A549 (cell line): ENCODE measurements at regions of chr16 and their contacts with region 1.

Region 1: DNA sequence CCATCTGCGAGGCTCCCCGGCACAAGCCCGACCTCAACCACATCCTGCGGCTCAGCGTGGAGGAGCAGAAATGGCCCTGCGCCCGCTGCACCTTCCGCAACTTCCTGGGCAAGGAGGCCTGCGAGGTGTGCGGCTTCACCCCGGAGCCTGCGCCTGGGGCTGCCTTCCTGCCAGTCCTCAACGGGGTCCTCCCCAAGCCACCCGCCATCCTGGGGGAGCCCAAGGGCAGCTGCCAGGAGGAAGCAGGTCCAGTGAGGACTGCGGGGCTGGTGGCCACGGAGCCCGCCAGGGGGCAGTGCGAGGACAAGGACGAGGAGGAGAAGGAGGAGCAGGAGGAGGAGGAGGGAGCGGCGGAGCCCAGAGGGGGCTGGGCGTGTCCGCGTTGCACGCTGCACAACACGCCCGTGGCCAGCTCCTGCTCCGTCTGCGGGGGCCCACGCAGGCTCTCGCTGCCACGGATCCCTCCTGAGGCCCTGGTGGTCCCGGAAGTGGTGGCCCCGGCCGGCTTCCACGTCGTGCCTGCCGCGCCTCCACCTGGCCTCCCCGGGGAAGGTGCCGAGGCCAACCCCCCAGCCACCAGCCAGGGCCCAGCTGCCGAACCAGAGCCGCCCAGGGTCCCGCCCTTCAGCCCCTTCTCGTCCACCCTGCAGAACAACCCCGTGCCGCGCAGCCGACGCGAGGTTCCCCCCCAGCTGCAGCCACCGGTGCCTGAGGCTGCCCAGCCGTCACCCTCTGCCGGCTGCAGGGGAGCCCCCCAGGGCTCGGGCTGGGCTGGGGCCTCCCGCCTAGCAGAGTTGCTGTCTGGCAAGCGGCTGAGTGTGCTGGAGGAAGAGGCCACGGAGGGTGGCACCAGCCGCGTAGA is 13.1 kb upstream of the PRR35 start:
- DNase-seq: peak in 1 of 2 experiments; percentile 71
- ATAC-seq: peak; percentile 67 to 91
- H3K4me3 ChIP-seq: no peak overlapping the region
- H3K27ac ChIP-seq: peak overlapping the region in 1 of 2 experiments; percentile 50; a peak in 1 of 6 replicates
- H3K4me1 ChIP-seq: 0 out of 3 replicates have a peak, but pooled peaks cover 2% of the 10 kb centered on the region
- CTCF ChIP-seq: peak; percentile 54
- EP300 ChIP-seq: no peak
- POLR2A ChIP-seq: no peak
- RAD21 ChIP-seq: peak; percentile 36 to 57; a peak in 4 of 5 replicates

Region 2: DNA sequence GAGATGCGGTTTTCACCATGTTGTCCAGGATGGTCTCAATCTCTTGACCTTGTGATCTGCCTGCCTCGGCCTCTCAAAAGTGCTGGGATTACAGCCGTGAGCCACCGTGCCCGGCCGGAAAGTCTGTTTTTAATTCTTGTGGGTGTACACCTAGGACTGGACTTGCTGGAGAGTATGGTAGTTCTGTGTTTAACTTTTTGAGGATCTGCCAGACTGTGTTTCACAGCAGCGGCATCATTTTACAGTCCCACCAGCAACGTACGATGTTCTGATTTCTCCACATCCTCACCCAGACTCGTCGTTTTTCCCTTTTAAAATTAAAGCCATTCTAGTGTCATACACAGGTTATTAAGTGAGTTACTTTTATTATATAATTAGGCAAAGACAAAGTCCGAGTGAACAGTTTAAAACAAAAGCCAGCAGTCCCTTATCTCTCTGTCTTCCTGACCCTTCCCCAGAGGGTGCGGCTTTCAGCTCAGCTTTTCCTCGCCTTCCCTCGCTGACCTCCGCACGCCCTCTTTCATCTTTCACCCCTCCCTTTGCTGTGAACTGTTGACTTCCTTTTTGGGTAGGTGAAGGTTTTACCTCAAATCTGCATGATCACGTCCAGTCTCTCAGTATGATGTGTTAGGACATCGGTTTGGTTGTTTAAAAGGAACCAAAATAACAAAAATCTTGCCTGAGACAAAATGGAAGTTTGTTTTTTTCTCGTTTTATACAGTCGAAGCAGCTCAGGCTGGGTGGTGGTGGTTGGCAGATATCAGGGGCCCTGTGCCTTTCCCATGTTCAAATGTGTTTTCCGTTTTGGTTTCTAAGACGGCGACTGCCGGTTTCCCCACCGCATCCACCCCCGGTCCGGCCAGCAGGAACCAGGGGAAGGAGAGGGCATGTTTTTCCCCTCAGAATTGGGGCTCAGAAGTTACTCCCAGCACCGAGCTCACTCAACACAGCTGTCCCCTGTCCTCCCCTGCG is 294.5 kb before region 1 on chr16:
- CTCF ChIA-PET with region 1: no interaction called
- POLR2A ChIA-PET with region 1: no interaction called
- DNase-seq: no peak
- ATAC-seq: no peak
- H3K4me3 ChIP-seq: no peak overlapping the region
- H3K27ac ChIP-seq: no peak overlapping the region
- H3K4me1 ChIP-seq: peaks cover 8% of the 10 kb centered on the region; the same call in 2 of the 3 replicates
- CTCF ChIP-seq: no peak
- EP300 ChIP-seq: no peak
- POLR2A ChIP-seq: no peak
- RAD21 ChIP-seq: no peak

Region 3: GRCh38 chr16:430904-431303 is 116.2 kb before region 1 on chr16:
- CTCF ChIA-PET with region 1: no interaction called
- POLR2A ChIA-PET with region 1: no interaction called
- DNase-seq: no peak
- ATAC-seq: no peak
- H3K4me3 ChIP-seq: no peak overlapping the region
- H3K27ac ChIP-seq: no peak overlapping the region
- H3K4me1 ChIP-seq: peaks cover 10% of the 10 kb centered on the region
- CTCF ChIP-seq: no peak
- EP300 ChIP-seq: no peak
- POLR2A ChIP-seq: no peak
- RAD21 ChIP-seq: no peak

Region 4: GRCh38 chr16:529012-529575 is 18.0 kb before region 1 on chr16:
- CTCF ChIA-PET with region 1: interaction called, 11 read pairs
- POLR2A ChIA-PET with region 1: no interaction called
- DNase-seq: no peak
- ATAC-seq: no peak
- H3K4me3 ChIP-seq: peak overlapping the region; percentile 96
- H3K27ac ChIP-seq: peak overlapping the region; percentile 95 to 97
- H3K4me1 ChIP-seq: peaks cover 42% of the 10 kb centered on the region
- CTCF ChIP-seq: no peak
- EP300 ChIP-seq: no peak
- POLR2A ChIP-seq: no peak
- RAD21 ChIP-seq: no peak

Region 5: DNA sequence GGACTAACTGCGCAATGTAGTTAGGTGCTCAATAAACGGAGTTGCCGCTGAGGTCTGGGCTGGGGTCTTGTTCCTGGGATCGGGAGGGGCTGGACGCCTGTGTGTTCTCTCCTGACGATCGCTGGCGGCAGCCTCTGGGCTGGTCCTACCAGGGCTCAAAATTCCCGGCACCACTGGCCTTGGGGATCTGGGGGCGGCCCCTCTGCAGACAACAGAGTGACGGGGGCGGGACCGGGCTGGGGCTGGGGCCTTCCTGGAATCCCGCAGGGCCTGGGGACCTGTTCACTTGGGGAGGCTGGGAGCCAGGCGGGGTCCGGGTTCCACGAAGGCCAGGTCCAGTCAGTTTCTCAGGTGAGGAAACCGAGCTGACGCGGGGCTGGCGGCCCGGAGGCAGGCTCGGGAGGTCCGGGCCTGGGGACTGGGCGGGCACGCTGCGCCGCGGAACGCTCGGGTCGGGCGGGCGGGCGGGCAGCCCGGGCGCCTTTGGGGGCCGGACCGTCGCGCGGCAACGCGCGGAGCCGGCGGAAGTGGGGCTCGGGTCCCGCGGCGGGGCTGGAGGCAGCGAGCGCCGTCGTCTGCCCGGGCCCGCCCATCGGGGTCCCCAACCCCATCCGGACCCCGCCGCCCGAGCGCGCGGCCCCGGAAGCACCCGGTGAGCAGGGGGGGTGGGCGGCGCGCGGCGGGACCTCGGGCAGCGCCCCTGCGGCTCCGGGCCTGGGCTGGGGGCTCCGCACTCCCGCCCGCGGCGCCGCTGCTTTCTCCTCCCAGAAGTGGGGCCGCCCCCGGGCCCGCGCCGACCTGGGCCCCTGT is 22.5 kb after region 1 on chr16 and contains the start of gene PIGQ:
- CTCF ChIA-PET with region 1: interaction called, 12 read pairs
- POLR2A ChIA-PET with region 1: no interaction called
- DNase-seq: peak; percentile 64 to 81
- ATAC-seq: peak; percentile 73 to 80
- H3K4me3 ChIP-seq: peak within 1 kb of the TSS; percentile 99
- H3K27ac ChIP-seq: peak within 1 kb of the TSS; percentile 91 to 95
- H3K4me1 ChIP-seq: peaks cover 22% of the 10 kb centered on the region
- CTCF ChIP-seq: no peak
- EP300 ChIP-seq: no peak
- POLR2A ChIP-seq: peak; percentile 18; the same call in 1 of the 2 replicates
- RAD21 ChIP-seq: no peak
- polyA plus RNA-seq, gene PIGQ: 13.2 and 15.7 TPM in 2 replicates